ENCODE measurements at regions of chr1 and their contacts with region 1.

Region 1: GRCh38 chr1:26787706-26788514 is at the start of gene PIGV:
- DNase-seq: peak; percentile 81 to 95 (median 90)
- ATAC-seq: peak; percentile 84
- H3K4me3 ChIP-seq: peak within 1 kb of the TSS; percentile 91
- H3K4me3 Mint-ChIP-seq: peak within 1 kb of the TSS; percentile 81 to 99 (median 90)
- H3K27ac ChIP-seq: peak within 1 kb of the TSS; percentile 95
- H3K27ac Mint-ChIP-seq: peak within 1 kb of the TSS; percentile 87 to 100 (median 99)
- H3K4me1 ChIP-seq: peaks cover 41 to 42% of the 10 kb centered on the region in 2 donors
- H3K4me1 Mint-ChIP-seq: peaks cover 38 to 74% (median 69%) of the 10 kb centered on the region in 7 donors
- H3K27me3 ChIP-seq: no peaks in the 10 kb centered on the region
- H3K27me3 Mint-ChIP-seq: no peaks in the 10 kb centered on the region
- total RNA-seq, gene PIGV: 8.4 to 17.9 (median 16.7) TPM

Region 2: DNA sequence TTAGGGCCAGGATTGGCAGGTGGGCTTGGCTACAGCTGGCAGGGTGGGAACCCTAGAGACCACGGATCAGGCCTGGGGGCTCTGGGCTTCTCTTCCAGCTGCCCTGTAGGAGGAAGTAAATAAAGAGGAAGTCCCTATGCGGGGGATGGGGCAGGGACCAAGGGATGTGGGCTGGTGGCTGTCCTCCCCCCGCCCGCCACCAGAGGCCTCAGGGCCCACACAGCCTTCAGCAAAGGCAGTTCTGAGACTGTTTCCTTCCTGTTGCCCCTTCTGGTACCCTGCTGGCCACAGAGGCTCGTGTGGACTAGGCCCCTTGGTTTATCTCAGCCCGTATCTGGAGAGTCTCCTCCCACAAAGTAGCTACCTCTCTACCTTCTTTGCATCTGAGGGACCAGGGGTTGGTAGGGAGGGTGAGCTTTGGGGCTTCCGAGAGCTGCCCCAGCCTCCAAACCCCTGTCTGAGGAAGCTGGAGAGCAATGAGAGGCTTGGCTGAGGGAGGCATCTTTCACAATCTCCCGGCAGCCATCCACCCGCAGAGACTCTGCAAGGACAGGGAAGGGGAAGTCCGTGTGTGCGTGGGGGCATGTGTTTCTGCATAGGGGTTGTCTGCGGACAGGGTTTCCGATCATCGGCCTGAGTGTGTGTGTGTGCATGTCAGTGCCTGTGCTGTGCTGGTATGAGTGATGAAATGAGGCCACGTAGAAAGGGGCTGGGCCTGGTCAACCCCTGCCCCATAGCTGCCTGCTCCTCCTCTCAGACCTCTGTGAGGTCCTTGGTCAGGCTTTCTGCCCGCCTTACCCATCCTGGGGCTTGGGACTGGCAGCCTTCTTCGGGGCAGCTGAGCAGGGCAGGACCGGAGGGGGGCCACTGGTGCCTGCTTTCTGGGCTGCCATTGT is 245.8 kb before region 1 on chr1:
- CTCF ChIA-PET with region 1: interaction called, 3 read pairs
- POLR2A ChIA-PET with region 1: interaction called, 10 read pairs
- intact Hi-C with region 1: loop called (anchors 2 kb)
- DNase-seq: peak; percentile 56 to 84 (median 66)
- ATAC-seq: peak; percentile 72
- H3K4me3 ChIP-seq: peak overlapping the region; percentile 33
- H3K4me3 Mint-ChIP-seq: peak overlapping the region; percentile 75 to 91 (median 84)
- H3K27ac ChIP-seq: peak overlapping the region; percentile 71
- H3K27ac Mint-ChIP-seq: peak overlapping the region; percentile 82 to 99 (median 96)
- H3K4me1 ChIP-seq: peaks cover 77 to 89% of the 10 kb centered on the region in 2 donors
- H3K4me1 Mint-ChIP-seq: peaks cover 80 to 94% (median 83%) of the 10 kb centered on the region in 7 donors
- H3K27me3 ChIP-seq: no peaks in the 10 kb centered on the region
- H3K27me3 Mint-ChIP-seq: no peaks in the 10 kb centered on the region

Region 3: DNA sequence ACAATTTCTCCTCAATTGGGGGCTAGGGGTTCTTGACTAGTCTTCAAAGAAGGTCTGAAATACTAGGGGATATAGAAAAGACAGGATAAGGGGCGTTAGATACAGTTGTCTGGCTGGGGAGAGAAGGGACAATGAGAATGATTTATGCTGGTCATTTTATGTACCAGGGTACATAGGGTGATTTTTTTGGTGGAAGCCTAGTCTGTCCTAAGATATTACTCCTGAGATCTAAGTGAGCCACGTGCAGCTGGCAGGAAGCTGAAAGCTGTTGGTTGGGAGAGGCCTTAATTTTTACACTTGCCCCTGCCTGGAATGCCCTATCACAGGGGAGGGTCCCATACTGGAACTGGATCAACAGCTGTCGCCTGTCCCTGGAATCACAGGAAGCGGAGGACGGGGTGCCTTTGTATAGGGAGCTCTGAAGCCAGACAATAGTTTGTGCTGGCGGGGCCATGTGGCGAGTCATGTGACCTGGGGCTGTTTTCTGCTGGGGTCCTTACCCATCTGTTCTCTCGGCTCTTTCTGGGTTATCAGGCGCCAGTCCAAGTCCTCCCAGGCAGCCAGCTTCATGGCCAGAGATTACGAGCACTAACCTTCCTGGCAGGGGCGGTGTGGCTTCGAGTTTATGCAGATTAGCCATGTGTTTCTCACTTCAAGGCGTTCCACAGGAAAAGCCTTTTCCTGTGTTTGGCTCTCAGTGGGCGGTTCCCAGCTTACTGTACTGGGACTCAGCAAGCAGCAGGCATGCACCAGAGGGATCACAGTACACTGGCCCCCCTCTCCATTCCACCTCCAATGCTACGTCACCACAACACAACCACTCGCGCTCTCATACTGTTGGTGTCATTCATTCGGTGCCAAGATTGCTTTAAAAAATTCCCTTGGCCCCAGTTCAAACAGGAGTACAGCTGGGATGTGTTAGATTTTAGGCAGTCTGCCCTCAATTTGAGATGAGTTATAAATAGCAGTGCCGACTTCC is 64.6 kb before region 1 on chr1:
- CTCF ChIA-PET with region 1: interaction called, 19 read pairs
- POLR2A ChIA-PET with region 1: interaction called, 10 read pairs
- intact Hi-C with region 1: loop called in 1 of 2 experiments (anchors 1 kb)
- DNase-seq: peak in 6 of 9 donors; percentile 18 to 77 (median 36)
- ATAC-seq: peak; percentile 80
- H3K4me3 ChIP-seq: peak overlapping the region; percentile 37
- H3K4me3 Mint-ChIP-seq: peak overlapping the region; percentile 64 to 89 (median 81)
- H3K27ac ChIP-seq: peak overlapping the region; percentile 58
- H3K27ac Mint-ChIP-seq: peak overlapping the region; percentile 8 to 92 (median 77)
- H3K4me1 ChIP-seq: peaks cover 77 to 81% of the 10 kb centered on the region in 2 donors
- H3K4me1 Mint-ChIP-seq: peaks cover 80 to 93% (median 89%) of the 10 kb centered on the region in 7 donors
- H3K27me3 ChIP-seq: no peaks in the 10 kb centered on the region
- H3K27me3 Mint-ChIP-seq: no peaks in the 10 kb centered on the region

Region 4: DNA sequence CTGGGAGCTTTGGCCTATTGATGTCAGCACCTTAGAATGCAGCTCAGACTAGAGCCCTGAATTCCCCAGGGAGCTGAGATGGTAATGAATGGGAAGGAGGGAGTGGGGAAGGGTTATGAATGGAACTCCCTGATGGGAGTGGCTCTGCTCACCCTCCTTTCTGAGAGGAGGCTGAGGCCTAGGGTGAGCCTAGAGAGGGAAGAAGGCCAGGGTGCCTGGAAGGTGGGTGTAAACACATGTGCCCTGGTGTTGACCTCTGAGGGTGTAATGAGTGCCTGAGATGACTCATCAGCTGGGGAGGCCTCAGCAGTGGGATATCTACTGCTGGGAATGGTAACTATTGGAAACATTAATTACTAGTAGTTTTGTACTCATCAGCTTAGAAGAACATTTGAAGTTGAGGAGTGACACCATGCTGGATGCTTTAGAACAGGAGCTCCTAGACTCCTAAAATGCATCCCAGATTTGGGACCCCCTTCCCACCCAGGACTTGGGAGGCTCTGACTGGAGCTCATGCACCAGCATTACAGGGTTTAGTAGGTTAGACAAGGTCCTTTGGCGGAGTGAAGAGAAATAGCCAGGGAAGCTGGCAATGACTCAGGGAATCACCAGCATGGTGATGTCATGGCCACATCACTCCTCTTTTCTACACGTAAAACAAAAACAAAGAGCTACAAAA is 16.1 kb before region 1 on chr1:
- CTCF ChIA-PET with region 1: interaction called, 8 read pairs
- POLR2A ChIA-PET with region 1: interaction called, 11 read pairs
- intact Hi-C with region 1: loop called in 1 of 2 experiments (anchors 2 kb)
- DNase-seq: no peak
- ATAC-seq: peak; percentile 54
- H3K4me3 ChIP-seq: no peak overlapping the region
- H3K4me3 Mint-ChIP-seq: no peak overlapping the region
- H3K27ac ChIP-seq: peak overlapping the region; percentile 25
- H3K27ac Mint-ChIP-seq: peak overlapping the region in 8 of 9 donors; percentile 55 to 78 (median 68)
- H3K4me1 ChIP-seq: no peaks in the 10 kb centered on the region
- H3K4me1 Mint-ChIP-seq: peaks cover 0 to 42% (median 7%) of the 10 kb centered on the region in 7 donors
- H3K27me3 ChIP-seq: no peaks in the 10 kb centered on the region
- H3K27me3 Mint-ChIP-seq: no peaks in the 10 kb centered on the region

Region 5: GRCh38 chr1:26864610-26865527 is 77.0 kb after region 1 on chr1:
- CTCF ChIA-PET with region 1: no interaction called
- POLR2A ChIA-PET with region 1: interaction called, 4 read pairs
- intact Hi-C with region 1: loop called (anchors 2 kb)
- DNase-seq: peak; percentile 88 to 96 (median 91)
- ATAC-seq: peak; percentile 98
- H3K4me3 ChIP-seq: peak overlapping the region; percentile 97
- H3K4me3 Mint-ChIP-seq: peak overlapping the region; percentile 86 to 100 (median 96)
- H3K27ac ChIP-seq: peak overlapping the region; percentile 78
- H3K27ac Mint-ChIP-seq: peak overlapping the region; percentile 65 to 96 (median 93)
- H3K4me1 ChIP-seq: peaks cover 5 to 10% of the 10 kb centered on the region in 2 donors
- H3K4me1 Mint-ChIP-seq: peaks cover 10 to 33% (median 24%) of the 10 kb centered on the region in 7 donors
- H3K27me3 ChIP-seq: no peaks in the 10 kb centered on the region
- H3K27me3 Mint-ChIP-seq: no peaks in the 10 kb centered on the region